Colonic mucosa (tissue), 4 donors: ENCODE measurements at regions of chr18 and their contacts with region 1.

Region 1: GRCh38 chr18:23812546-23813440 is 123.5 kb downstream of the LAMA3 start:
- DNase-seq: no peak
- H3K4me3 ChIP-seq: no peak overlapping the region
- H3K27ac ChIP-seq: no peak overlapping the region
- H3K4me1 ChIP-seq: no peaks in the 10 kb centered on the region
- H3K27me3 ChIP-seq: no peaks in the 10 kb centered on the region
- CTCF ChIP-seq: peak; percentile 46

Region 2: DNA sequence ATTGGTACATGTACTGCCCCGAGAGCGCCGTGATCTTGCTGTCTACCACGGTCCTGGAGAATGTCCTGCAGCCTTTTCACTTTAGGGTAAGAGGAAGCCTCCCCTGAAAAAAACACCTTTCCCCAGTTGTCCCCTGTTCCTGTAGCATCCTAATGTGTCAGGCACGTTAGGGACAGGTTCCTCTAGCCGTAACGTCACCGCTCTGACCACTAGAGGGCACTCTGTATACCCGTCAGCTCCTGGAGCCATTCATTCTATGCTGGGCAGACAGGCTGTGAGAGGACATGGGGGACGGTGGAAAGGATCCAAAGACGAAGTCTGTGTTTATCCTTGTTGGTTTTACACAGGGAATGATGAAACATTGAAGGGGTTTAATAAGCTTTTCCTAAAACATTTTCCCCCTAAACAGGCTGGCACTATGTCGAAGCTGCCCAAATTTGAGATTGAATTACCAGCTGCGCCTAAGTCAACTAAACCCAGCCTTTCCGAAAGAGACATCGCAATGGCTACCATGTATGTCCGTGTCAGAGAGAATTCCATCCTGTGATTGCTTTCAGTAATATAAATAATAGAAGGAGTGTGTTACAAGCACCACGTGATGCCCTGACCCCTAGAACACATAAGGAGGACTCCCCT is 296.8 kb before region 1 on chr18:
- intact Hi-C with region 1: loop called (anchors 10 kb)
- DNase-seq: peak; percentile 83
- H3K4me3 ChIP-seq: no peak overlapping the region
- H3K27ac ChIP-seq: no peak overlapping the region
- H3K4me1 ChIP-seq: no peaks in the 10 kb centered on the region
- H3K27me3 ChIP-seq: no peaks in the 10 kb centered on the region
- CTCF ChIP-seq: peak; percentile 75

Region 3: GRCh38 chr18:23623040-23623439 is 189.8 kb before region 1 on chr18:
- intact Hi-C with region 1: loop called (anchors 2 kb)
- DNase-seq: no peak
- H3K4me3 ChIP-seq: no peak overlapping the region
- H3K27ac ChIP-seq: no peak overlapping the region
- H3K4me1 ChIP-seq: peaks cover 11% of the 10 kb centered on the region
- H3K27me3 ChIP-seq: peaks cover 11% of the 10 kb centered on the region
- CTCF ChIP-seq: no peak

Region 4: GRCh38 chr18:23703057-23703986 is 109.5 kb before region 1 on chr18:
- intact Hi-C with region 1: loop called (anchors 10 kb)
- DNase-seq: peak; percentile 36
- H3K4me3 ChIP-seq: no peak overlapping the region
- H3K27ac ChIP-seq: no peak overlapping the region
- H3K4me1 ChIP-seq: no peaks in the 10 kb centered on the region
- H3K27me3 ChIP-seq: no peaks in the 10 kb centered on the region
- CTCF ChIP-seq: peak; percentile 43